CD14-positive monocyte (primary cell): ENCODE measurements at regions of chr19 and their contacts with region 1.

Region 1: GRCh38 chr19:8569066-8569771 is 8.0 kb downstream of the MYO1F start:
- DNase-seq: peak; percentile 96 to 97 (median 96)
- H3K4me3 ChIP-seq: peak overlapping the region; percentile 7 to 100 (median 16)
- H3K4me3 Mint-ChIP-seq: peak overlapping the region; percentile 73 to 88
- H3K27ac ChIP-seq: peak overlapping the region; percentile 90 to 92
- H3K27ac Mint-ChIP-seq: peak overlapping the region; percentile 97 to 99 (median 99)
- H3K4me1 ChIP-seq: peaks cover 99 to 100% of the 10 kb centered on the region in 2 donors
- H3K4me1 Mint-ChIP-seq: peaks cover 91% of the 10 kb centered on the region
- H3K27me3 ChIP-seq: no peaks in the 10 kb centered on the region
- H3K27me3 Mint-ChIP-seq: peaks cover 0 to 5% (median 1%) of the 10 kb centered on the region in 3 donors
- CTCF ChIP-seq: no peak

Region 2: DNA sequence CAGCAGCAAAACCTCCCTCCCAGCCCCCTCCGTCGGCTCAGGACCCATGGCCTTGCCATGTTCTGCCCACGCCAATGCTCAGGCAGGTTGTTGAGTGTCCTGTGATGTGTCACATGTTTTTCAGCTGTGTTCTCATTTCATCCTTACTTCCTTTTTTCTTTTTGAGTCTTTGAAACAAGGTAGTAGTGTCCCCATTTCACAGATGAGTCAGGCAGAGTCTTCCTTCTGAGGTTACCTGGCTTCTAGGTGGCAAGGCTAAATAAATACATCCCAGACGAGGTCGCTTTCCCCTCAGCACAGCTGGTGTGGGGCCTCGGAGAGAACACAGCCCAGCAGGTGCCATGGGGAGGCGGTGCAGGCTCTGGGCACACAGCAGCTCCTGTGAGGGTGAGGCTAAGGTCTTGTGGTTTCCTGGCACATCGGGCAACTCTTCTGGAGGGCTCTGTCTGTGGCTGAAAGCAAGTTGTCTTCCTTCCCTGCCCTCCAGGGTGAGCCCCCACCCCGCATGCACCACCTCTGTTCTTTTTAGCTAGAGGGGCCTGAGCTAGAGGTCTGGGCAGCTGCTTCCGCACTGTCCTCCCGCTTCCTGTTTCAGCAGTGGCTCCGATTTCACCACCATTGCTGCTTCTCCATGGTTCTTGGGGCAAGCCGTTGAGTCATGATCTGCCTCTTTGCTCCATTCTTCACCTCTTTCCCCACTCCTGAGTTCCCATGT is 81.9 kb before region 1 on chr19:
- intact Hi-C with region 1: loop called in 1 of 2 experiments (anchors 5 kb)
- DNase-seq: peak; percentile 90 to 98 (median 97)
- H3K4me3 ChIP-seq: peak overlapping the region in 1 of 3 experiments; percentile 37
- H3K4me3 Mint-ChIP-seq: peak overlapping the region; percentile 24 to 76
- H3K27ac ChIP-seq: peak overlapping the region; percentile 92 to 93
- H3K27ac Mint-ChIP-seq: peak overlapping the region; percentile 97 to 99 (median 98)
- H3K4me1 ChIP-seq: peaks cover 84 to 88% of the 10 kb centered on the region in 2 donors
- H3K4me1 Mint-ChIP-seq: peaks cover 79% of the 10 kb centered on the region
- H3K27me3 ChIP-seq: no peaks in the 10 kb centered on the region
- H3K27me3 Mint-ChIP-seq: peaks cover 0 to 6% (median 2%) of the 10 kb centered on the region in 3 donors
- CTCF ChIP-seq: no peak

Region 3: GRCh38 chr19:8592231-8593009 is 23.2 kb after region 1 on chr19:
- intact Hi-C with region 1: no loop called
- DNase-seq: peak; percentile 82 to 89 (median 87)
- H3K4me3 ChIP-seq: peak overlapping the region in 1 of 3 experiments; percentile 57
- H3K4me3 Mint-ChIP-seq: peak overlapping the region; percentile 69 to 93
- H3K27ac ChIP-seq: no peak overlapping the region
- H3K27ac Mint-ChIP-seq: peak overlapping the region in 4 of 7 donors; percentile 15 to 84 (median 47)
- H3K4me1 ChIP-seq: peaks cover 15% of the 10 kb centered on the region in 2 donors
- H3K4me1 Mint-ChIP-seq: peaks cover 15% of the 10 kb centered on the region
- H3K27me3 ChIP-seq: peaks cover 4 to 31% of the 10 kb centered on the region in 2 donors
- H3K27me3 Mint-ChIP-seq: peaks cover 31 to 37% (median 33%) of the 10 kb centered on the region in 3 donors
- CTCF ChIP-seq: no peak

Region 4: DNA sequence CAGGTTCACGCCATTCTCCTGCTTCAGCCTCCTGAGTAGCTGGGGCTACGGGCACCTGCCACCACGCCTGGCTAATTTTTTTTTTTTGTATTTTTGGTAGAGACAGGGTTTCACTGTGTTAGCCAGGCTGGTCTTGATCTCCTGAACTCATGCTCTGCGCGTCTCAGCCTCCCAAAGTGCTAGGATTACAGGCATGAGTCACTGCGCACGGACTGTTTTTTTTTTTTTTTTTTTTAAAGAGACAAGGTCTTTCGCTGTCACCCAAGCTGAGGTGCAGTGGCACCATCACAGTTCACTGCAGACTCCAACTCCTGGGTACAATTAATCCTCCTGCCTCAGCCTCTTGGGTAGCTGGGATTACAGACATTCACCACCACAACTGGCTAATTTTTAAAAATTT is 49.5 kb after region 1 on chr19:
- intact Hi-C with region 1: no loop called
- DNase-seq: no peak
- H3K4me3 ChIP-seq: no peak overlapping the region
- H3K4me3 Mint-ChIP-seq: no peak overlapping the region
- H3K27ac ChIP-seq: no peak overlapping the region
- H3K27ac Mint-ChIP-seq: no peak overlapping the region
- H3K4me1 ChIP-seq: peaks cover 6 to 7% of the 10 kb centered on the region in 2 donors
- H3K4me1 Mint-ChIP-seq: peaks cover 9% of the 10 kb centered on the region
- H3K27me3 ChIP-seq: peaks cover 0 to 4% of the 10 kb centered on the region in 2 donors
- H3K27me3 Mint-ChIP-seq: peaks cover 3 to 20% (median 14%) of the 10 kb centered on the region in 3 donors
- CTCF ChIP-seq: no peak

Region 5: GRCh38 chr19:8721334-8721733 is 152.1 kb after region 1 on chr19 and contains the start of gene OR2Z1:
- intact Hi-C with region 1: no loop called
- DNase-seq: no peak
- H3K4me3 ChIP-seq: no peak within 1 kb of the TSS
- H3K4me3 Mint-ChIP-seq: no peak within 1 kb of the TSS
- H3K27ac ChIP-seq: no peak within 1 kb of the TSS
- H3K27ac Mint-ChIP-seq: no peak within 1 kb of the TSS
- H3K4me1 ChIP-seq: no peaks in the 10 kb centered on the region
- H3K4me1 Mint-ChIP-seq: no peaks in the 10 kb centered on the region
- H3K27me3 ChIP-seq: no peaks in the 10 kb centered on the region
- H3K27me3 Mint-ChIP-seq: peaks cover 0 to 12% (median 0%) of the 10 kb centered on the region in 3 donors
- CTCF ChIP-seq: no peak
- polyA plus RNA-seq, gene OR2Z1: not detected

Region 6: DNA sequence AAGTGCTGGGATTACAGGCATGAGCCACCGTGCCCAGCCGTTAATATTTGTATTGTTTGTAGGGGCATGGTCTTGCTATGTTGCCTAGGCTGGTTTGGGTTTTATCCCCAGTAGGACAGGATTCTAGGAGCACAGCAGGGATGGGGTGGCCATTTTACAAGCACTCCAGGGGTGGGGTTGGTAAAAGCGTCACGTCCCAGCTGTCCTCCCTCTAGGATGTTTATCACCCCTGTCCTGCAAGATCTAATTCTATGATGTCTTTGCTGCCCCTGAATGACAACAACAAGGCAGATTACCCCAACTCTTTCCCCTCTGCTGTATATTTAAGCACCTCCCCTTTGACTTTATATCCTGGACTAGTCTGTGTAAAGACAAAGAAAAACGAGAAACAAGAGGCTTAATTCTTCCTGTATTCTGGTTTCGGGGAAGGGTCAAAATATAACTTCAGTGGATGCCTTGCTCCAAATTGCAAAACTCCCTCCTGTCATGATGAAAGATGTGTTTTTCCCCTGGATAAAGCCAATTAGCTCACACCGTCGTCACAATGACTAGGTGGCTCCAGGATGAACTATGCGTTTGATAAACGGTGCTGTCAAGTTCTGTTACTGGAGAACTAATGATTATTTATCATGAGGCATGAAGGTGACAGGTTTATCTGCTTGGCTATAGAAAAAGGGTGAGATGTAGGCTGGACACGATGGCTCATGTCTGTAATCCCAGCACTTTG is 489.8 kb after region 1 on chr19:
- intact Hi-C with region 1: no loop called
- DNase-seq: peak in 2 of 3 donors; percentile 3 to 65
- H3K4me3 ChIP-seq: no peak overlapping the region
- H3K4me3 Mint-ChIP-seq: no peak overlapping the region
- H3K27ac ChIP-seq: no peak overlapping the region
- H3K27ac Mint-ChIP-seq: peak overlapping the region in 5 of 7 donors; percentile 18 to 74 (median 72)
- H3K4me1 ChIP-seq: peaks cover 0 to 2% of the 10 kb centered on the region in 2 donors
- H3K4me1 Mint-ChIP-seq: peaks cover 9% of the 10 kb centered on the region
- H3K27me3 ChIP-seq: no peaks in the 10 kb centered on the region
- H3K27me3 Mint-ChIP-seq: peaks cover 0 to 4% (median 3%) of the 10 kb centered on the region in 3 donors
- CTCF ChIP-seq: no peak